ENCODE measurements at regions of chr1 and their contacts with region 1.

Region 1: DNA sequence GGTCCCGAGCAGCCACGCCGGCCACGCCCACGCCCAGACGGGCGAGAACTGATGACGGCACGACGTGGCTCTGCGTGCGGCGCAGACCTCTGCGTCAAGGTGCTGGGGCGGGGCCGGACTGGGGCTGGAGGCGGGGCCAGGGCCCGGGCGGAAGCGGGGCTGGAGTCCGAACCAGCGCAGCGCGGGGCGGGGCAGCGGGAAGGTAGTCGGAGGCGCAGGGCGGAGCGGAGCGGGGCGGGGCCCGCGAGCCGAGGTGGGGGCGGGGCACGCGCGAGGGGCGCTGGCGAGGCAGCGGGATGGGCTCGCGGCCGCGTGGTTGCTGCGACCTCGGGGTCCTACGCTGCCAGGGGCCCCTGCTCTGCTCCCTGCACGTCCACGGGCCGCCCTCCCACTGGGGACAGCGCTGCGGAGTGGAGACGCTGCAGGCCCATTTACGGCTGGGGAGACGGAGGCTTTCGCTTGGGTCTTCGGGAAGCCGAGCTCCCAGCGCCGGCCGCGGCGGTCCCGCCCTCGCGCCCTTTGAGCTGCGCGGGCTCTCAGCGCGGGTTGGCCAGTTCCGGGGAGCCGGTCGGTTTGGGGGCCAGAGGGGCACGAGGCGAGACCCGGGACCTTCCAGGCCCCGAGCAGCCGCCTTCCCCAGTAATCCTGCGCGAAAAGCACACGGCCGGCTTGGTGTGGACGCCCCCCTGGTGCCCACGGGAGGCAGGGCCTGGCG is at the start of gene PEX10:
- DNase-seq: peak; percentile 96 to 99 (median 98)
- ATAC-seq: peak; percentile 90 to 96 (median 94)
- H3K4me3 ChIP-seq: peak within 1 kb of the TSS; percentile 67 to 98 (median 91)
- H3K27ac ChIP-seq: peak within 1 kb of the TSS; percentile 41 to 93 (median 86)
- H3K4me1 ChIP-seq: peaks cover 4 to 37% (median 26%) of the 10 kb centered on the region in 12 donors
- H3K27me3 ChIP-seq: peaks cover 0 to 24% (median 17%) of the 10 kb centered on the region in 9 donors
- CTCF ChIP-seq: no peak
- POLR2A ChIP-seq: peak in 1 of 2 donors; percentile 70
- total RNA-seq, gene PEX10: 17.2 to 26.5 (median 18.9) TPM

Region 2: DNA sequence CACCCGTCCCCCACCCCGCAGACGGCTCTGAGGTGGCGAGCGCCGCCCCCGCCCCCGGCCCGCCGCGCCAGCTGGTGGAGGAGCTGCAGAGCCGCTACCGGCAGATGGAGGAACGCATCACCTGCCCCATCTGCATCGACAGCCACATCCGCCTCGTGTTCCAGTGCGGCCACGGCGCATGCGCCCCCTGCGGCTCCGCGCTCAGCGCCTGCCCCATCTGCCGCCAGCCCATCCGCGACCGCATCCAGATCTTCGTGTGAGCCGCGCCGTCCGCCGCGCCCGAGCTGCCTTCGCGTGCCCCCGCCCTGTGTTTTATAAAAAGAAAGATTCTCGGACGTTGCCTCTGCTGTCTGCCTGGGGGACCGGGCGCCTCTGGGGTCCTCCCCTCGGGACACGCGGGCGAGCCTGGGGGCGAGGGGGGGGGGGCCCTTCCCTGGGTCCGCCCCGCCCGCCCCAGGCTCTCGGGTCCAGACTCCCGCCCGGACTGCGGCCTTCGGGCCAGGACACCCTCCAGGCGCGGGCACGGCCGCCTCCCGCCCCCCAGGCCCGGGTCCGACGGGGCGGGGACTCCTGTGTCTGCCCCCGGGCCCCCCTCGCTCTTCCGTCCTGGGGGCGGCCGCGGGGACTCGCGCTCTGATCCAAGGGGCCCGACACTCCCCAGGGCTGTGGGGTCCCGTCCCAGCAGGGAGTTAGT is 782.3 kb before region 1 on chr1:
- intact Hi-C with region 1: no loop called
- DNase-seq: peak; percentile 63 to 90 (median 72)
- ATAC-seq: peak in 3 of 4 donors; percentile 3 to 17 (median 6)
- H3K4me3 ChIP-seq: peak overlapping the region in 10 of 12 donors; percentile 24 to 55 (median 43)
- H3K27ac ChIP-seq: peak overlapping the region; percentile 20 to 94 (median 80)
- H3K4me1 ChIP-seq: peaks cover 0 to 33% (median 6%) of the 10 kb centered on the region in 12 donors
- H3K27me3 ChIP-seq: peaks cover 0 to 29% (median 8%) of the 10 kb centered on the region in 9 donors
- CTCF ChIP-seq: no peak
- POLR2A ChIP-seq: no peak

Region 3: GRCh38 chr1:2525920-2526823 is 113.5 kb after region 1 on chr1 and contains the start of gene PANK4:
- intact Hi-C with region 1: loop called in 6 of 10 experiments (anchors 2 to 5 kb)
- DNase-seq: peak; percentile 94 to 97 (median 94)
- ATAC-seq: peak; percentile 87 to 90 (median 88)
- H3K4me3 ChIP-seq: peak within 1 kb of the TSS; percentile 72 to 97 (median 86)
- H3K27ac ChIP-seq: peak within 1 kb of the TSS; percentile 61 to 92 (median 86)
- H3K4me1 ChIP-seq: peaks cover 29 to 76% (median 68%) of the 10 kb centered on the region in 12 donors
- H3K27me3 ChIP-seq: peaks cover 0 to 31% (median 0%) of the 10 kb centered on the region in 9 donors
- CTCF ChIP-seq: peak in 3 of 12 donors; percentile 17 to 38 (median 20)
- POLR2A ChIP-seq: peak; percentile 68 to 75
- total RNA-seq, gene PANK4: 27.2 to 43.0 (median 36.6) TPM

Region 4: GRCh38 chr1:2586154-2587070 is 173.7 kb after region 1 on chr1 and contains the start of gene PRXL2B:
- intact Hi-C with region 1: loop called in 2 of 10 experiments (anchors 2 to 10 kb)
- DNase-seq: peak; percentile 99 to 100 (median 100)
- ATAC-seq: peak; percentile 93 to 96 (median 94)
- H3K4me3 ChIP-seq: peak within 1 kb of the TSS; percentile 64 to 96 (median 84)
- H3K27ac ChIP-seq: peak within 1 kb of the TSS; percentile 91 to 100 (median 98)
- H3K4me1 ChIP-seq: peaks cover 3 to 38% (median 18%) of the 10 kb centered on the region in 12 donors
- H3K27me3 ChIP-seq: no peaks in the 10 kb centered on the region
- CTCF ChIP-seq: no peak
- POLR2A ChIP-seq: peak; percentile 63 to 95
- total RNA-seq, gene PRXL2B: 5.1 to 13.9 (median 7.2) TPM

Region 5: DNA sequence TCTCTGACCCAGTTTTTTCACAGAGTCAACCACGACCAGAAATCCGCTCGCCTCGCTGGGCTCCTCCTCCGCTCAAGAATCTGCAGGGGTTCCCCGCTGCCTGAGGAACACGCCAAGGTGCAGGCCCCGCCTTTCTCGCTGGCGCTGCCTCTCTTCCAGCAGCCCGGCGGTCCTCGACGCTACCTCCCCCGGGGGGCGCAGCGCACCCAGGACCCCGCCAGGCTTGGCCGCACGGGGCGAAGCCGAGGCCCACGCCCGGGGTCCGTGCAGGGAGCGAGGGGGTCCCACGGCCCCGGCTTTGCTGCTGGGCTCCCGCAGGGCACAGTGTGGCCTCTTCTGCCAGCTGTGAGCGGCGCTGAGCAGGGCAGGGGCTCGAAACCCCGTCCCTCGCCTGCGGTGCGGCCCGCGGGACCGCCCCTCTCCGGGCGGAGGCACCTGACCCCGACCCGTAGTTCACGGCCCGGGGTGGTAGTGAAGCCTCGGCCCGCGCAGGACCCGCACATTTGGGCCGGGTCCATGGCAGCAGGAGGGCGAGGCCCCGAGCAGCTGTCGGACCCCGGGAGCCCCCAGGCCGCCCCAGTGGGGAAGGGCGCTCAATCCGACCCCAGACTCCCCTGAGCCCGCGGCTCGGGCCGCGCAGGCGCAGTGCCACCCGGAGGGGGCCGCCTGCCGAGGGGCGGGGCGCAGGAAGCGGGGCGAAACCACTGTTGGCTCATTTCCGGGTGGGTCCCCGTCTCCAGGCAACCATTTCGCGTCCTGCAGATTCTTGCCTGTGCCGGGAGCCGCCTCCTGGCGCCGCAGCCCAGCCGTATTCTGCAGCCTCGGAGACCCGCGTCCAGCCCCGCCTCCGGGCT is 230.1 kb after region 1 on chr1:
- intact Hi-C with region 1: loop called in 5 of 10 experiments (anchors 2 to 10 kb)
- DNase-seq: peak; percentile 94 to 96 (median 94)
- ATAC-seq: peak; percentile 66 to 95 (median 87)
- H3K4me3 ChIP-seq: peak overlapping the region; percentile 68 to 99 (median 85)
- H3K27ac ChIP-seq: peak overlapping the region; percentile 56 to 94 (median 88)
- H3K4me1 ChIP-seq: peaks cover 0 to 31% (median 14%) of the 10 kb centered on the region in 12 donors
- H3K27me3 ChIP-seq: no peaks in the 10 kb centered on the region
- CTCF ChIP-seq: peak in 6 of 12 donors; percentile 13 to 47 (median 27)
- POLR2A ChIP-seq: peak; percentile 8 to 88

Region 6: GRCh38 chr1:2786329-2787162 is 373.9 kb after region 1 on chr1:
- intact Hi-C with region 1: loop called in 9 of 10 experiments (anchors 2 to 5 kb)
- DNase-seq: peak in 3 of 5 donors; percentile 46 to 79 (median 47)
- ATAC-seq: peak in 2 of 4 donors; percentile 39 to 41
- H3K4me3 ChIP-seq: no peak overlapping the region
- H3K27ac ChIP-seq: no peak overlapping the region
- H3K4me1 ChIP-seq: peaks cover 0 to 9% (median 0%) of the 10 kb centered on the region in 12 donors
- H3K27me3 ChIP-seq: peaks cover 28 to 64% (median 47%) of the 10 kb centered on the region in 9 donors
- CTCF ChIP-seq: peak; percentile 57 to 92 (median 75)
- POLR2A ChIP-seq: no peak

Region 7: GRCh38 chr1:3423245-3423829 is 1010.7 kb after region 1 on chr1:
- intact Hi-C with region 1: loop called in 6 of 10 experiments (anchors 5 to 10 kb)
- DNase-seq: peak; percentile 86 to 95 (median 90)
- ATAC-seq: peak; percentile 91 to 96 (median 92)
- H3K4me3 ChIP-seq: peak overlapping the region in 1 of 12 donors; percentile 44
- H3K27ac ChIP-seq: peak overlapping the region; percentile 39 to 95 (median 83)
- H3K4me1 ChIP-seq: peaks cover 11 to 41% (median 31%) of the 10 kb centered on the region in 12 donors
- H3K27me3 ChIP-seq: no peaks in the 10 kb centered on the region
- CTCF ChIP-seq: no peak
- POLR2A ChIP-seq: peak in 1 of 2 donors; percentile 22

Region 8: GRCh38 chr1:4083231-4084047 is 1670.8 kb after region 1 on chr1:
- intact Hi-C with region 1: no loop called
- DNase-seq: no peak
- ATAC-seq: no peak
- H3K4me3 ChIP-seq: no peak overlapping the region
- H3K27ac ChIP-seq: no peak overlapping the region
- H3K4me1 ChIP-seq: no peaks in the 10 kb centered on the region
- H3K27me3 ChIP-seq: peaks cover 0 to 7% (median 0%) of the 10 kb centered on the region in 9 donors
- CTCF ChIP-seq: no peak
- POLR2A ChIP-seq: no peak

Measured in heart left ventricle (tissue), 16 donors.